CD8-positive, alpha-beta T cell (primary cell): ENCODE measurements at regions of chr19 and their contacts with region 1.

Region 1: DNA sequence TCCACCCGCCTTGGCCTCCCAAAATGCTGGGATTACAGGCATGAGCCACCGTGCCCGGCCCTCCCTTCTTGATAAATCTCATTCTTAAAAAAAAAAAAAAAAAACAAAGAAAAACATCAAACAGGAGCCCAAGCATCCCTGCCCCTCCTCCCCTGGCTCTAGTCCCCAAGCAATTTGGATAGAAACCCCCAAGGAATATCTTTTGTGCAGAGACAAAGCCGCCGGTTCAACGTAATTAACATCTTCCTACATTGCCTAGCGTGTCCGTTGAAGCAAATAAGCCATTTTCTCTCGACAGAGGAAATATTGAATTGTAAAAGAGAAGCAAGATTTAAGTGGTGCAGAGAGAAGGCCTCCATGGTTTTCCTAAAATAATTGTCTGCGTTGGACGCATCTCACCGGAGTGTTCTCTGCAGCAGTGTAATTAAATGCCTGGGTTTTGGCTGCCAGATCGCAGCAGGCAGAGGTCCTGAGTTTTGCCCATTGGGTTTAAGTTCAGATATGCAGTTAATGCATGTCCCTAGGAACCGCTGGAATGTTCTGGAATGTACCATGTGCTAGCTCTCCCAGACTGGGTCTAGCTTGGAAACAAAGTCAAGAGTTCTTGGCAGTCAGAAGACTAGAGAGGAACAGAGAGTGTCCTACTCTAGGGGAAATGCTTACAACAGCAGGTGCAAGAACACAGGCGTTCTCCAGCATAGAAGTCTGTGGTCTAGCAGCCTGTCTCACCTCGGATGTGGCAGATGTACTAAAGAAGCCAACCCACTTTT is 30.8 kb downstream of the PIN1 start:
- DNase-seq: peak in 8 of 9 experiments; percentile 31 to 83 (median 63)
- ATAC-seq: peak; percentile 77
- H3K4me3 ChIP-seq: peak overlapping the region in 1 of 2 experiments; percentile 34
- H3K4me3 Mint-ChIP-seq: peak overlapping the region; percentile 76
- H3K27ac ChIP-seq: no peak overlapping the region
- H3K27ac Mint-ChIP-seq: peak overlapping the region; percentile 88
- H3K4me1 ChIP-seq: peaks cover 66% of the 10 kb centered on the region
- H3K4me1 Mint-ChIP-seq: peaks cover 58% of the 10 kb centered on the region
- H3K27me3 ChIP-seq: no peaks in the 10 kb centered on the region
- H3K27me3 Mint-ChIP-seq: no peaks in the 10 kb centered on the region
- CTCF ChIP-seq: no peak

Region 2: DNA sequence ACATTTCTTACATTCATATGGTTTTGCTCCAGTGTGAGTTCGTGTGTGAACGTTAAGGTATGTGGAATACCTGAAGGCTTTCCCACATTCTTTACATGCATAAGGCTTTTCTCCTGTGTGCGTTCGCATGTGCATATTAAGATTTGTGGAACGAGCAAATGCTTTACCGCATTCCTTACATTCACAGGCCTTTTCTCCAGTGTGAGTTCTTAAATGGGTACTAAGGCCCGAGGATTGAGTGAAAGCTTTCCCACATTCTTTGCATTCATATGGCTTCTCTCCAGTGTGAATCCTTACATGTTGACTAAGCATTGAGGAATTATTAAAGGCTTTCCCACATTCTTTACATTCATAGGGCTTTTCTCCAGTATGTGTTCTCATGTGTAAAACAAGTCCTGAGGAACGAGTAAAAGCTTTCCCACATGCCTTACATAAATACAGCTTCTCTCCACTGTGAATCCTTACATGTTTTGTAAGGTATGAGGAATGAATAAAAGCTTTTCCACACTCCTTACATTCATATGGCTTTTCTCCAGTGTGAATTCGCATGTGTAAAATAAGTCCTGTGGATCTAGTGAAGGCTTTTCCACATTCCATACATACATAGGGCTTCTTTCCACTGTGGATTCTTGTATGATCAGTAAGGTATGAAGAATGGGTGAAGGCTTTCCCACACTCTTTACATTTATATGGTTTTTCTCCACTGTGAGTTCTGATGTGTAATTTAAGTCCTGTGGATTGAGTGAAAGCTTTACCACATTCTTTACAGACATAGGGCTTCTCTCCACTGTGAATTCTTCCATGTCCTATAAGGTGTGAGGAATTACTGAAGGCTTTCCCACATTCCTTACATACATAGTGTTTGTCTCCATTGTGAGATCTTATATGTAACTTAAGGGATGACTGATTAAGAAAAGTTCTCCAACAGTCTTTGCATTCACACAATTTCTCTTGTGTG is 108.1 kb before region 1 on chr19:
- CTCF ChIA-PET with region 1: no interaction called
- POLR2A ChIA-PET with region 1: no interaction called
- intact Hi-C with region 1: no loop called
- DNase-seq: no peak
- ATAC-seq: no peak
- H3K4me3 ChIP-seq: no peak overlapping the region
- H3K4me3 Mint-ChIP-seq: no peak overlapping the region
- H3K27ac ChIP-seq: no peak overlapping the region
- H3K27ac Mint-ChIP-seq: no peak overlapping the region
- H3K4me1 ChIP-seq: no peaks in the 10 kb centered on the region
- H3K4me1 Mint-ChIP-seq: no peaks in the 10 kb centered on the region
- H3K27me3 ChIP-seq: no peaks in the 10 kb centered on the region
- H3K27me3 Mint-ChIP-seq: no peaks in the 10 kb centered on the region
- CTCF ChIP-seq: no peak

Region 3: GRCh38 chr19:9914315-9915207 is 48.6 kb after region 1 on chr19:
- CTCF ChIA-PET with region 1: interaction called, 3 read pairs
- POLR2A ChIA-PET with region 1: no interaction called
- intact Hi-C with region 1: loop called in 1 of 2 experiments (anchors 5 kb)
- DNase-seq: peak; percentile 69 to 89 (median 81)
- ATAC-seq: peak; percentile 92
- H3K4me3 ChIP-seq: peak overlapping the region; percentile 49 to 66
- H3K4me3 Mint-ChIP-seq: peak overlapping the region; percentile 73
- H3K27ac ChIP-seq: no peak overlapping the region
- H3K27ac Mint-ChIP-seq: no peak overlapping the region
- H3K4me1 ChIP-seq: peaks cover 15% of the 10 kb centered on the region
- H3K4me1 Mint-ChIP-seq: peaks cover 8% of the 10 kb centered on the region
- H3K27me3 ChIP-seq: peaks cover 0 to 15% of the 10 kb centered on the region in 2 experiments
- H3K27me3 Mint-ChIP-seq: peaks cover 30% of the 10 kb centered on the region
- CTCF ChIP-seq: peak; percentile 73